GM10248 (cell line): ENCODE measurements at regions of chr7 and their contacts with region 1.

Region 1: DNA sequence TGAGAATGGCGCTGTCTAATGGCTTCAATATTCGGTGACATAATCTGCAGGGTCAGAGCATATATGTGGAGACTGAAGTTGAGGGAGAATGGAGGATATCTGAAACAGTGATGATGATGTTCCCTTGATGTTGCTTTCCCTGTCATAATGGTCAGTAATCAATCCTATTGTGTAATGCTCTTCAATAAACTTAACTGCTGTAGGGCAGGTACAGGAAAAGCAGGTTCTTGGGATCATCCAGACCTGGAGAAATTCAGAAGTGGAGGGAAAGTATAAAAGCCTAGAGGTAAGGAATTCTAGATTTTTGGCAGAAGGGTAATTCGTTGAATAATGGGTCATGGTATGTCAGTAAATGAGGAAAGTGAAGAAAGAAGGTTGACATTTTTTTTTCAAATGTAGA is 281.4 kb upstream of the TEX47 start:
- DNase-seq: no peak
- CTCF ChIP-seq: no peak

Region 2: GRCh38 chr7:89064831-89065483 is 12.0 kb before region 1 on chr7:
- CTCF ChIA-PET with region 1: interaction called, 11 read pairs
- POLR2A ChIA-PET with region 1: no interaction called
- DNase-seq: no peak
- CTCF ChIP-seq: no peak

Region 3: GRCh38 chr7:90222811-90223725 is 1146.1 kb after region 1 on chr7:
- CTCF ChIA-PET with region 1: no interaction called
- POLR2A ChIA-PET with region 1: no interaction called
- DNase-seq: no peak
- CTCF ChIP-seq: no peak